Mammary epithelial cell (primary cell): ENCODE measurements at regions of chr18 and their contacts with region 1.

Region 1: DNA sequence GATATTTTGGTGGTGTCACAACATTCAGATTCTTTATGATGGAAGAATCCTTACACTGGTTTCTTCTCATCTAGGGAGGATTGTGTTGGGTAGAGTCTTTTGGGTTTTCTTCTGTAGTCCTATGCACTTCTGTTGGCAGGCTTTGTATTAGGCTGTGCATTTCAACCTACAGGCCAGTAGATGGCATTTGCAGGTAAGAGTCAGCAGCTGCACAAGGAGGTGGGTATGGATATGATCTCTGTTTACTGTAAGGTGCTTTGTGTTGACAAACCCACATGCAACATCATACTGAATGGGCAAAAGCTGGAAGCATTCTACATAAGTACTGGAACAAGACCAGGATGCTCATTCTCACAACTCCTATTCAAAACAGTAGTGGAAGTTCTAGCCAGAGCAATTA is 656.8 kb downstream of the METTL4 start:
- DNase-seq: peak; percentile 11
- H3K4me3 ChIP-seq: no peak overlapping the region
- H3K27ac ChIP-seq: no peak overlapping the region
- H3K4me1 ChIP-seq: no peaks in the 10 kb centered on the region
- H3K27me3 ChIP-seq: no peaks in the 10 kb centered on the region
- CTCF ChIP-seq: peak; percentile 64 to 76

Region 2: DNA sequence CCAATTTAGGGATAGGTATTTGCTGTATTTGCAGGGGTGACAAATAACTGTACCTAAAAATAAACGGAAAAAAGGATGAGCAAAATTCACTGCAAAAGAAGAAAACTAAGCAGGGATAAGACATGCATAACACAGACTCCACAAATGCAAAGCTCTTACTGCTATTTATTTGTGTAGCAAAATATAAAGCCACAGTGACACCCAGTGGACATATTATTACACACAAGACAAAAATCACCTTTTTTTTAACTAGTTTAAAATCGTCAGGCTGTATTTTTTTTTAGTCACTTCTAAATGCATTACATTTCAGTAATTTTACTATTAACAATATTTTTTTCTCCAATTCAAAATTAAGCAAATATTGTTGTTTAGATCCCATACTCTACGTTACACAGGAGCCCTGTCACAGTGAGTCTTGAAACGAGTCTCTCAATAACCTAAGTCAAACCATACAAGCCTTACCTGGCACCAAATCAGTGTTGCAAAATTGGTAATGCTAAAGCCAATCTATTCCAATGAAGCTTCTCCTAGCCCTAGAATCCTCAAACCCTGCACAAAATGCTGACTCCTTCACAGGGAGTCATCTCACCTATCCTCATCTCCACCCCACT is 633.1 kb after region 1 on chr18:
- CTCF ChIA-PET with region 1: no interaction called
- dilution Hi-C with region 1: no loop called
- in situ Hi-C with region 1: no loop called
- intact Hi-C with region 1: loop called (anchors 2 kb)
- DNase-seq: peak; percentile 19
- H3K4me3 ChIP-seq: no peak overlapping the region
- H3K27ac ChIP-seq: no peak overlapping the region
- H3K4me1 ChIP-seq: no peaks in the 10 kb centered on the region
- H3K27me3 ChIP-seq: no peaks in the 10 kb centered on the region
- CTCF ChIP-seq: peak; percentile 39 to 42